ENCODE measurements at regions of chr5 and their contacts with region 1.

Region 1: GRCh38 chr5:142769741-142770631 is at the start of gene ARHGAP26:
- DNase-seq: peak; percentile 98
- H3K4me3 Mint-ChIP-seq: peak within 1 kb of the TSS; percentile 94
- H3K27ac Mint-ChIP-seq: peak within 1 kb of the TSS; percentile 90
- H3K4me1 Mint-ChIP-seq: peaks cover 44% of the 10 kb centered on the region
- H3K27me3 Mint-ChIP-seq: peaks cover 3% of the 10 kb centered on the region
- total RNA-seq, gene ARHGAP26: 12.7 and 15.3 TPM in 2 replicates

Region 2: DNA sequence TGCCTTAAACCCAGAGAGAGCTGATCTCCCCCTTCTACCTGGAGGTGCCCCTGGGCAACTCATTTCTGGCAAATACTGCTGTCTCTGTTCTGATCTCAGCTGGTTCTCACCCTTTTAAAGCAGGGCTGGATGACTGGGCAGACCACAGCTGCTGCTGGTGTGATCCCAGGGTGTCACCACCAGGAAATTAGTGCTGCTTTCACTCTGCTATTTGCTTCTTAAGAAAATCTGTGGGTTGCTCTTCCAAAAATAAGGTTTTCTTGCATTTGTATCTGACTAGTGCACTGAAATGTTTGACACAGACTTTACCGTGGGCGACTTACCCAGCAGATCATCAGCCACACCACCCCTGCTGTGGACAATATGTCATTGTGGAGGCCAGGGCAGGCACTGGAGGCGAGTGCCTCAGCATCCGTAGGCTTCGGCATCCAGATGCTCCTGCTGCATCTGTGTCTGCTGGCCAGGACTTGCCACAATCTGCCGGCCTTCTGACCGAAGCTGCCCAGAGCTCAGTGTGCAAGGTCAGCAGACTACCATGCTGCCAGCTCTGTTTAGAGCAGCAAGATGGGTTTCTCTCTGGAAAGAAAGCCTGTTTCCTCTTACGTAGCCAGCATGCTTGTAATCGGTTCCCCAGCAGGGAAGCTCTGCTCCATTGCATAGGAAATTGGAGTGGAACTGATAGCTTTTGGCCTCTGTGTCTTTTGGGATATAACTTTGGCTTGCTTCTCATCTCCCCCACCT is 13.8 kb after region 1 on chr5:
- intact Hi-C with region 1: loop called (anchors 1 kb)
- DNase-seq: peak; percentile 82
- H3K4me3 Mint-ChIP-seq: peak overlapping the region; percentile 5
- H3K27ac Mint-ChIP-seq: peak overlapping the region; percentile 71
- H3K4me1 Mint-ChIP-seq: peaks cover 40% of the 10 kb centered on the region
- H3K27me3 Mint-ChIP-seq: no peaks in the 10 kb centered on the region

Region 3: DNA sequence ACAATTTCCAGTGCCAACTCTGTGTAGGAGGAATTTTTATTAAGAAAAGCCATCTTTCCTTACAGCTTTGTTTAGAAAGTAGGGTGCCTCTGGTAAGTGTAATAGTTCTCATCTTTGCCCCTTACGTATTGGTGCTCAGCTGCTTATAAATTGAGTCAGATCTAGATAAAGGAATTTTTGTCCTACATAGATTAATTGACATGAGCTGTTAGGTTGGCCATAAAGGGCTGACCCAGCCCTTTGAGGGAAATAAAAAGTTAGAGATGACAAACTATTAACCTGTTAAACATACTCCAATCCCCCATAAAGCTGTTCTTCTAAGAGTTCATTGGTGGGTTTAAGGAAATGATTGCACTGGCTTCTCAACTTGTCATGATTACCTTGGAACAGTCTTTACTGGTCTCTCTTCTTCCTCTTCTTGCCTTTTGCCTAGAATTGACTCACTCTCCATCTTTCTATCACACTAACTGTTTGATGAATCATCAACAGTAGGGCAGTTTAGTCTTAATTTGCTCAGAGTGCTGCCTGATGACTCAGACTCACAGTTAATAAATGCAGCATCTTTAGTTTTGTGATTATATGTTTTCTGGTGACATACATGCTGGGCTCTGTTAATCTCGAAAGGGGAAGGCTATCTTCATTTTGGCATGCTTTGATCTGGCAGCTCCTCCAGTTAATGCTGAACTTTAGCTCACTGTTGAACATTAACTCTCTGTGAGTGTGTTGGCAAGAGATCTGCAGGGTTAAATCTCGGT is 51.9 kb after region 1 on chr5:
- intact Hi-C with region 1: loop called (anchors 1 kb)
- DNase-seq: no peak
- H3K4me3 Mint-ChIP-seq: peak overlapping the region; percentile 0
- H3K27ac Mint-ChIP-seq: peak overlapping the region; percentile 71
- H3K4me1 Mint-ChIP-seq: peaks cover 55% of the 10 kb centered on the region
- H3K27me3 Mint-ChIP-seq: no peaks in the 10 kb centered on the region

Region 4: DNA sequence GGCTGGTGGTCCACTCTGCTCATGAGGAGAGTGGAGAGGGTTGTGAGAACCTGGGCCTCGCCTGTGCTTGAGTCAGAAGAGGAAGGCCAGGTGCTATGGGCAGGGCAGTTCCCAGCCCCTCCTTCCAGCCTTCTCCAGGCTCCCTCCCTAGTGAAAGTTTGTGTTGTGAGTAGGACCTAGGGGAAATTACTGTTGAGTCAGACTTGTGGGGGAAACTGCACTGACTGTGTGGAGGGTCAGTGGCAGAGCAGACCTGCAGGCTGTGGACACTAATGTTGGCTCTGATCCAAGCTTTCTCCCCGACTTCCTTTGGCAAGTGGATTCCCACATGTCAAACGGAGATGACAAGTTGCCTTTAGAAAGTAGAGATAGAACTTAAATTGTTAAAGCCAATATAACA is 102.8 kb after region 1 on chr5:
- intact Hi-C with region 1: loop called (anchors 1 kb)
- DNase-seq: no peak
- H3K4me3 Mint-ChIP-seq: no peak overlapping the region
- H3K27ac Mint-ChIP-seq: no peak overlapping the region
- H3K4me1 Mint-ChIP-seq: peaks cover 3% of the 10 kb centered on the region
- H3K27me3 Mint-ChIP-seq: no peaks in the 10 kb centered on the region